OCI-LY7 (cell line): ENCODE measurements at regions of chr10 and their contacts with region 1.

Region 1: GRCh38 chr10:102072673-102073527 is 7.8 kb downstream of the HPS6 start:
- DNase-seq: peak; percentile 81
- H3K4me3 ChIP-seq: no peak overlapping the region
- H3K27ac ChIP-seq: no peak overlapping the region
- H3K4me1 ChIP-seq: no peaks in the 10 kb centered on the region
- CTCF ChIP-seq: peak; percentile 98

Region 2: GRCh38 chr10:101249171-101249581 is 823.7 kb before region 1 on chr10:
- CTCF ChIA-PET with region 1: no interaction called
- POLR2A ChIA-PET with region 1: no interaction called
- intact Hi-C with region 1: no loop called
- DNase-seq: no peak
- H3K4me3 ChIP-seq: no peak overlapping the region
- H3K27ac ChIP-seq: no peak overlapping the region
- H3K4me1 ChIP-seq: no peaks in the 10 kb centered on the region
- CTCF ChIP-seq: no peak

Region 3: GRCh38 chr10:101840741-101841453 is 232.0 kb before region 1 on chr10:
- CTCF ChIA-PET with region 1: interaction called, 3 read pairs
- POLR2A ChIA-PET with region 1: no interaction called
- intact Hi-C with region 1: loop called (anchors 1 kb)
- DNase-seq: peak; percentile 75
- H3K4me3 ChIP-seq: no peak overlapping the region
- H3K27ac ChIP-seq: no peak overlapping the region
- H3K4me1 ChIP-seq: peaks cover 15% of the 10 kb centered on the region
- CTCF ChIP-seq: peak; percentile 96

Region 4: GRCh38 chr10:101889256-101890210 is 183.4 kb before region 1 on chr10:
- CTCF ChIA-PET with region 1: no interaction called
- POLR2A ChIA-PET with region 1: interaction called, 4 read pairs
- intact Hi-C with region 1: loop called (anchors 1 kb)
- DNase-seq: peak; percentile 79
- H3K4me3 ChIP-seq: no peak overlapping the region
- H3K27ac ChIP-seq: no peak overlapping the region
- H3K4me1 ChIP-seq: no peaks in the 10 kb centered on the region
- CTCF ChIP-seq: peak; percentile 99

Region 5: GRCh38 chr10:102016416-102016815 is 56.5 kb before region 1 on chr10:
- CTCF ChIA-PET with region 1: no interaction called
- POLR2A ChIA-PET with region 1: no interaction called
- intact Hi-C with region 1: loop called (anchors 5 kb)
- DNase-seq: no peak
- H3K4me3 ChIP-seq: no peak overlapping the region
- H3K27ac ChIP-seq: no peak overlapping the region
- H3K4me1 ChIP-seq: no peaks in the 10 kb centered on the region
- CTCF ChIP-seq: no peak

Region 6: GRCh38 chr10:102055647-102056419 is 17.1 kb before region 1 on chr10 and contains the start of gene ARMH3:
- CTCF ChIA-PET with region 1: no interaction called
- POLR2A ChIA-PET with region 1: interaction called, 14 read pairs
- intact Hi-C with region 1: no loop called
- DNase-seq: peak; percentile 98
- H3K4me3 ChIP-seq: peak within 1 kb of the TSS; percentile 86
- H3K27ac ChIP-seq: peak within 1 kb of the TSS; percentile 30
- H3K4me1 ChIP-seq: peaks cover 30% of the 10 kb centered on the region
- CTCF ChIP-seq: no peak
- total RNA-seq, gene ARMH3: 5.7 and 7.9 TPM in 2 replicates

Region 7: GRCh38 chr10:102200751-102201640 is 128.1 kb after region 1 on chr10:
- CTCF ChIA-PET with region 1: no interaction called
- POLR2A ChIA-PET with region 1: no interaction called
- intact Hi-C with region 1: no loop called
- DNase-seq: no peak
- H3K4me3 ChIP-seq: no peak overlapping the region
- H3K27ac ChIP-seq: no peak overlapping the region
- H3K4me1 ChIP-seq: no peaks in the 10 kb centered on the region
- CTCF ChIP-seq: no peak